Cardiac septum (tissue), 1 donor: ENCODE measurements at regions of chr20 and their contacts with region 1.

Region 1: DNA sequence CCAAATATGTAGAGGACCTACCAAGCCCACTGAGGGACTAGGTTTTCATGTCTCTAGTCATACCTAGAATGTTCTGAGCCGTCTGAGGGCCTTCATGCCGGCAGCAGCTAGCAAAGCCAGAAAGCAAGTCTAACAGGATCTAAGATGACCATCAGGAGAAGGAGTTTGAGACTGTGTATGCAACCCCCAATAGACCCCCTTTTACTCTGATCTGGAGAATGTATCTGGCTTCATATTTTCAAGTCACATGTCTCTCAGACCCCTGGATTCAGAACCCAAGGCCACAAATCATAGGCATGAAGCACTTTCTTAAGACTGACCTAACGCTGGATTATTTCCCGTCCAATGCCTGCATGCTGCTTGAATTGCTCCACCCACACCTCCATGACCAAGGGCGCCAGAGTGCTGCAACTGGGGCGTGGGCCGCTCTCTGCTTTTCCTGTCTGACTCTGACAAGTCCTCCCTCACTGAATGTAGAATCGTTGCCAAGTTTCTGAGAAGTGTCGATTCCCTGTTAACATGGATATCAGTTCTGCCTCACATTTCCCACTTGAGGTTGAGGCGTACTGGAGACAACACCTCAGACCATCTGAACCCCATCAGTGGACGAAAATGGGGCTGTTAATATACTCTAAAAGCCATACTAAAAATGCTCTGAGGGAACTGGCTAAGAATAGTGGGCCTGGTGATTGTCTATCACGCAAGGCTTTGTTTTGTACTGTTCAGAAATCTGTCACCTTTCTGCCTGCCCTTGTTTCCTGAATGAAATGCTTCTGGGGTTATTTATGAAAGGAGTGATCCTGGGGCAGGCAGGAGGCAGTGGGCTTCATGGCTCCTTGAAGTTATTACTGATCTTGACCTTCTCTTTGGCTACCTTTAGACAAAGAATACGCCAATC is 23.9 kb upstream of the ASXL1 start:
- DNase-seq: peak; percentile 91

Region 2: DNA sequence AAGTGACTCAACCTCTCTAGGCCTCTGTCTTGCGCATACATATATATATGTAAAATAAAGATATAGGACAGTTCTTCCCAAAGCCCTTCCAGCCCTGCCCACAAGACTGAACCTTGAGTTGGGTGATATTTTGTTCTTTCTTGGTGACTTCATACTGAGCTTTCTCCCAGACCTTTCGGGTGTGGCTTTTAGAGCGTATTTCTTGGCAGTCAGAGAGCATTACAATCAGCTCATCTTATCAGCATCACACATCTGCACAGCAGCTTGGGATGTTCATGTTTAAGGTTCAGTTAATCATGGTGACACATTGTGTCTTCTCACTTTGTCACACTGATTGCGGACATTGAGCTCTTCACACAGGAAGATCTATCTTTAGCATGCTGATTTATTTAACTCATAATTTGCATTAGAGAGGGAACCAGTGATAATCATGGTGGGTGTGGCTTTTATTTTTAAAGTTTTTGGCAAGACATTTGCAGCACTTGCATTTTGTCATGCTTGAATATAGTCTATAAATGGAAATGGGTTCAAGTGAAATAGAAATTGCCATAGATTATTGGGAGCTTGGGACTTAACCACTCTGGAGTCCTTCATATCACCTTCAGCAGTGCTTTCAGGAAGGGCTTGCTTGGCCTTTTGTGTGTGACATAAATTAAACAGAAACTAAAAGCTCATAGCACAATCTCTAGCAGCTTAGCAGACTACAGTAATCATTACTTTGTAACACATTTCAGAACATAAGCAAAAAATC is 48.4 kb before region 1 on chr20:
- intact Hi-C with region 1: loop called (anchors 5 kb)
- DNase-seq: no peak

Region 3: DNA sequence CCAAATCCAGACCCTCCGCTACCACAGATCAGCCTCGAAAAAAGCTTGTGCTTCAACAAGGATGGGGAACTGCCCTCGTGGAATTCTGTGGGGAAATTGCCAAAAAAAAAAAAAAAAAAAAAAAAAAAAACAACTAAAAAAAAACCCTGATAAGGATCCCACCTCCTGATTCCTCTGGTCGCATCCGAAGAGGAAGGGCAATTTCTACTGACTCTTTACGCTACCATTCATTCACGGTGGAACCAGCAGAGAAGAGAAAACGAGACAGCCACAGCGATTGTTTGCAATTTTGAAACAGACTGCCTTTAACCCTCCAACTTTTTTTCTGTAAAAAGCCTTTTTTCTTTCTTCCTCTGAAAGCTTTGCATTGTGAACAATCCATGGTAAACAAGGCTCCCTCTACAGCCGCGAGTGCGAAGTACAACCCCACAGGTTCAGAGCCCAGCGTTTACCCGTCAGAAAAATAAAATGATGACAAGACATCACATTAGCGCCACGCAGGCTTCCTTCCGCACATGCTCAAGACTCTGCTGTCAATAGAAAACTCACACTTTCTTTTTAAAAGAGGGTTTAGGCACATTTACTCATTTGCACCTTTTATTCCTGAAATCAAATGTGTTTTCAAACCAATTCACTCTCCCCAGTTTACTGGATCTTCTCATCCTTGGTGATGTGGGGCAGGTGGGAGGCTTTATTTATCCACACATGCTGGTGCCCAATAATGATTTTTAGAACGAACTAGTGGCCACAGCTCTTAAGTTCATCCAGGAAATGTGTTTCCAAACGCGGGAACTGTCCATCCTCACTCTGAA is 150.9 kb after region 1 on chr20:
- intact Hi-C with region 1: loop called (anchors 5 kb)
- DNase-seq: no peak